Lower lobe of right lung (tissue), 2 donors: ENCODE measurements at regions of chr10 and their contacts with region 1.

Region 1: DNA sequence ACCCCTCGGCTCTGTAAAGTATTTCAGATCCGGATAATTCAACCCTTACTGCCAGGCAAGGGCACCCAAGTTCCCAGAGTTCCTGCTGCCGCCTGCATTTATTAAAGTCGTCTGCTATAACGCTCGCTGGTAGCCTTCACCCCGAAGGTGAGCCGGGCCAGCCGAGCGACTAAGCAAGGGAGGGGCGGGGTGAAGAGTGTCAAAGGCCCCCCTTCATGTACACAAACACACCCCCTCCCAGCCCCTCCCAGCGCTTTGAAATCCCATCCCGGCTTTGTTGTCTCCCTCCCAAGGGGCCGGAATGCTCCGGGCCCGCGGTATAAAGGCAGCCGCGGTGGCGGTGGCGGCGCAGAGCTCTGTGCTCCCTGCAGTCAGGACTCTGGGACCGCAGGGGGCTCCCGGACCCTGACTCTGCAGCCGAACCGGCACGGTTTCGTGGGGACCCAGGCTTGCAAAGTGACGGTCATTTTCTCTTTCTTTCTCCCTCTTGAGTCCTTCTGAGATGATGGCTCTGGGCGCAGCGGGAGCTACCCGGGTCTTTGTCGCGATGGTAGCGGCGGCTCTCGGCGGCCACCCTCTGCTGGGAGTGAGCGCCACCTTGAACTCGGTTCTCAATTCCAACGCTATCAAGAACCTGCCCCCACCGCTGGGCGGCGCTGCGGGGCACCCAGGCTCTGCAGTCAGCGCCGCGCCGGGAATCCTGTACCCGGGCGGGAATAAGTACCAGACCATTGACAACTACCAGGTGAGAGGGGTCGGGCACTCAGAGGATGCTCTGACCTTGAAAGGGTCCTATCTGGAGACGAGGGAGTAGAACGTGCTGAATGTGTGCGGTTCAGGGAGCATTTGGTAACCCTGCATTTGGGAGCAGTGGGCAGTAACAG is at the start of gene DKK1:
- DNase-seq: peak; percentile 62
- ATAC-seq: peak; percentile 88 to 91
- H3K4me3 ChIP-seq: peak within 1 kb of the TSS; percentile 61
- H3K27ac ChIP-seq: no peak within 1 kb of the TSS
- H3K4me1 ChIP-seq: peaks cover 18% of the 10 kb centered on the region
- H3K27me3 ChIP-seq: peaks cover 29% of the 10 kb centered on the region
- CTCF ChIP-seq: peak; percentile 66
- total RNA-seq, gene DKK1: 2.5 TPM

Region 2: DNA sequence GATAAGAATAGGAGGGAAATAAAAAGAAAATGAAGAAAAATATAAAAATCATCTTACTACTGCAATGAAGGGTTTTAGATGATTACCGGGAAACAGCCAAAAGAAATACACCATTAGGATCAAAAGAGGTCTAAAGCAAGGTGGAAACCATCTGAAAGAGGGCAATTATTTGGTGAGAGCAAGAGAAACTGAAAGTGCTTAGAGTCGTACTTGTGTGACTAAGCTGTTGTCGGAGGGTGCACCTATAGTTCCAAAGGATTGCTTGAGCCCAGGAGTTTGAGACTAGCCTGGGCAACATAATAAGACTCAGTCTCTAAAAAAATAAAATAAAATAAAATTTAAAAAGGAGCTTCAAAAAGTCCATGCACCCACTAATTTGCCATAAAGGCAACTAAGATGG is 169.4 kb after region 1 on chr10:
- intact Hi-C with region 1: loop called (anchors 5 kb)
- DNase-seq: no peak
- ATAC-seq: no peak
- H3K4me3 ChIP-seq: no peak overlapping the region
- H3K27ac ChIP-seq: no peak overlapping the region
- H3K4me1 ChIP-seq: no peaks in the 10 kb centered on the region
- H3K27me3 ChIP-seq: no peaks in the 10 kb centered on the region
- CTCF ChIP-seq: no peak